Activated naive CD4-positive, alpha-beta T cell treated with anti-CD3 and anti-CD28 coated beads for 36 hours (primary cell): ENCODE measurements at regions of chr1 and their contacts with region 1.

Region 1: DNA sequence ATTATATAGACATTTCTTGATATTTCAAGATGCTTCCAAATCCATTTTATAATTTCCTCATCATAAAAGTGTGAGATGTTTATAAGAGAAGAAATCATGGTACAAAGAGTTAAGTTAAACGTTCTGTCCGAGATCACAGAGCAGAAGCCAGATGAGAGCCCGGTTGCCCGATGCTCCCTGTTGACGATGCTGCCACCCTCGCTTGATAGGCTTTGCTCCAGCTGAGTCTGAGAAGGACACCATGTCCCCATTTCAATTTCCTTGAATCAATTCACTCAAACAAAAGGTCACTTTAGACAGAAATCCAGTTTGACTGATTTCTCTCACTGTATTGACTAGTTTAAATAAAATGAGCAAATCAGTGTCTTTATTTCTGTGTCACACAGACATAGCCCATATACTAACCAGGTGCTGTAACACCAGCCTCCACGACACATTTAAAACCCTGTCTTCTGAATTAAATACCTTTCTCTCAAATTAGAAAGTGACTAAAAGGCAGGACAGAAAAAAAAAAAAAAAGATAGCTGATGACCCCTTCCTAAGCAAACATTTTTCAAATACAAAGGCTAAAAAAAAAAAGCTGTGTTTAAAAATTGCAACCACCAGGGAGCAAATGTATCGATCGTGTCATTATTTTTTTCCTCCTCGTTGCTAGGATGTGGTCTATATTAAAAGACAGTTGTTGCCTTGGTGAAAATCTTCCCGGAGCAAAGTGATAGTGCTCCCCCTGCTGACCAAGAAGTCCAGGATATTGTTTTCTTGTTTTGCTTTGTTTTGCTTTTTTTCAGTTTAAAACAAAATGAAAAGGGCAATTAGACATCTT is 35.2 kb downstream of the DNASE2B start:
- DNase-seq: peak; percentile 76
- H3K4me3 Mint-ChIP-seq: peak overlapping the region; percentile 63
- H3K27ac Mint-ChIP-seq: peak overlapping the region; percentile 25
- H3K4me1 Mint-ChIP-seq: peaks cover 15% of the 10 kb centered on the region
- H3K27me3 Mint-ChIP-seq: no peaks in the 10 kb centered on the region

Region 2: GRCh38 chr1:83931658-83932253 is 501.7 kb before region 1 on chr1:
- CTCF ChIA-PET with region 1: interaction called, 7 read pairs
- intact Hi-C with region 1: loop called (anchors 1 kb)
- DNase-seq: peak; percentile 24
- H3K4me3 Mint-ChIP-seq: no peak overlapping the region
- H3K27ac Mint-ChIP-seq: no peak overlapping the region
- H3K4me1 Mint-ChIP-seq: no peaks in the 10 kb centered on the region
- H3K27me3 Mint-ChIP-seq: peaks cover 8% of the 10 kb centered on the region

Region 3: GRCh38 chr1:84077476-84078107 is 355.9 kb before region 1 on chr1:
- CTCF ChIA-PET with region 1: no interaction called
- intact Hi-C with region 1: loop called (anchors 2 kb)
- DNase-seq: peak; percentile 69
- H3K4me3 Mint-ChIP-seq: peak overlapping the region; percentile 83
- H3K27ac Mint-ChIP-seq: peak overlapping the region; percentile 31
- H3K4me1 Mint-ChIP-seq: peaks cover 10% of the 10 kb centered on the region
- H3K27me3 Mint-ChIP-seq: no peaks in the 10 kb centered on the region

Region 4: GRCh38 chr1:84377480-84378095 is 55.9 kb before region 1 on chr1:
- CTCF ChIA-PET with region 1: no interaction called
- intact Hi-C with region 1: no loop called
- DNase-seq: no peak
- H3K4me3 Mint-ChIP-seq: no peak overlapping the region
- H3K27ac Mint-ChIP-seq: no peak overlapping the region
- H3K4me1 Mint-ChIP-seq: no peaks in the 10 kb centered on the region
- H3K27me3 Mint-ChIP-seq: no peaks in the 10 kb centered on the region

Region 5: GRCh38 chr1:84478876-84479868 is 45.7 kb after region 1 on chr1 and contains the start of gene RPF1:
- CTCF ChIA-PET with region 1: interaction called, 4 read pairs
- intact Hi-C with region 1: loop called (anchors 2 kb)
- DNase-seq: peak; percentile 74
- H3K4me3 Mint-ChIP-seq: peak within 1 kb of the TSS; percentile 99
- H3K27ac Mint-ChIP-seq: peak within 1 kb of the TSS; percentile 95
- H3K4me1 Mint-ChIP-seq: peaks cover 34% of the 10 kb centered on the region
- H3K27me3 Mint-ChIP-seq: peaks cover 18% of the 10 kb centered on the region
- total RNA-seq, gene RPF1: 57.2 to 57.6 TPM

Region 6: GRCh38 chr1:84573967-84574842 is 140.7 kb after region 1 on chr1 and contains the start of gene CTBS:
- CTCF ChIA-PET with region 1: interaction called, 4 read pairs
- intact Hi-C with region 1: loop called (anchors 2 kb)
- DNase-seq: peak; percentile 86
- H3K4me3 Mint-ChIP-seq: peak within 1 kb of the TSS; percentile 95
- H3K27ac Mint-ChIP-seq: peak within 1 kb of the TSS; percentile 98
- H3K4me1 Mint-ChIP-seq: peaks cover 28% of the 10 kb centered on the region
- H3K27me3 Mint-ChIP-seq: no peaks in the 10 kb centered on the region
- total RNA-seq, gene CTBS: 21.1 to 21.2 TPM